Activated CD4-positive, alpha-beta T cell treated with anti-CD3 and anti-CD28 coated beads, Interleukin-2, amount 10 ng/mL, durations not matched to agents 24 days and 14 days (primary cell): ENCODE measurements at regions of chr19 and their contacts with region 1.

Region 1: GRCh38 chr19:35066691-35067563 is 25.4 kb downstream of the HPN start:
- DNase-seq: peak; percentile 96
- H3K4me3 Mint-ChIP-seq: peak overlapping the region; percentile 49
- H3K27ac Mint-ChIP-seq: peak overlapping the region; percentile 78
- H3K4me1 Mint-ChIP-seq: peaks cover 11% of the 10 kb centered on the region
- H3K27me3 Mint-ChIP-seq: peaks cover 2% of the 10 kb centered on the region

Region 2: DNA sequence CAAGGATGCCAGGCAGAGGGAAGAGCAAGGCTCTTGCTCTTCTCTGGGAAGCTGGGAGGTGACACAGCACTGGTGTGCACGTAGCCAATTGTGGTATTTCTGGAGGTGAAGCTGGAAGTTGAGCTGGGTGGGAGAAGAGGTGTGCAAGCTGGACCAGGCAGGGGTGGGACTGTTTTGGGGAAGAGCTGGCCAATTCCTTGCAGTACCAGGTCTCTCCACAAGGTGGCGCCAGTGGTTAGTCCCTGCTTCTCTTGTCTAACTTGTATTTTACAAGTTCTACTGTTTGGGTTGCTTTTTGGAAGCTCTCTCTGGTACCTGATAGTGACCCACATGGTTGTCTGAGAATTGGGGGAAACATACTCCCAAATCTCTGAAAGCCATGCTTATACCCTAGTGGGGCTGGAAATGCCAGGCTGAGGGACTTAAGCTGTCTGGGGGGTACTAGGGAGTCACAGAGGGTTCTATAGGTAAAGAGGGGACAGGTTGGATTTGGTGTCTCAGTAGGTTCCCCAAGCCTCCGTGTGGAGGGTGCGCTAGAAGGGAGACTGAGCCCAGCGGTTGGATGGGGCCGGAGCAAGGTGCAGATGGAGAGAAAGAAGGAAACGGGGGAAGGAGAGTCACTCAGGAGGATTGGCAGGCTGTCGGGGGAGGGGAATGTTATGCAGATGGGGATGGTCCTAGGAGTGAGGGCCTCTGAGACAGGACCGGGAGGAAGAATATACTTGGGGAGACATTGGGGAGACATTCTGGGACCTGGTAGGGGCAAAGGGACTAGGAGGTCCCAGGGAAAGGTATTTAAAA is 22.4 kb before region 1 on chr19:
- intact Hi-C with region 1: loop called (anchors 1 kb)
- DNase-seq: peak; percentile 89
- H3K4me3 Mint-ChIP-seq: no peak overlapping the region
- H3K27ac Mint-ChIP-seq: no peak overlapping the region
- H3K4me1 Mint-ChIP-seq: peaks cover 19% of the 10 kb centered on the region
- H3K27me3 Mint-ChIP-seq: peaks cover 15% of the 10 kb centered on the region

Region 3: DNA sequence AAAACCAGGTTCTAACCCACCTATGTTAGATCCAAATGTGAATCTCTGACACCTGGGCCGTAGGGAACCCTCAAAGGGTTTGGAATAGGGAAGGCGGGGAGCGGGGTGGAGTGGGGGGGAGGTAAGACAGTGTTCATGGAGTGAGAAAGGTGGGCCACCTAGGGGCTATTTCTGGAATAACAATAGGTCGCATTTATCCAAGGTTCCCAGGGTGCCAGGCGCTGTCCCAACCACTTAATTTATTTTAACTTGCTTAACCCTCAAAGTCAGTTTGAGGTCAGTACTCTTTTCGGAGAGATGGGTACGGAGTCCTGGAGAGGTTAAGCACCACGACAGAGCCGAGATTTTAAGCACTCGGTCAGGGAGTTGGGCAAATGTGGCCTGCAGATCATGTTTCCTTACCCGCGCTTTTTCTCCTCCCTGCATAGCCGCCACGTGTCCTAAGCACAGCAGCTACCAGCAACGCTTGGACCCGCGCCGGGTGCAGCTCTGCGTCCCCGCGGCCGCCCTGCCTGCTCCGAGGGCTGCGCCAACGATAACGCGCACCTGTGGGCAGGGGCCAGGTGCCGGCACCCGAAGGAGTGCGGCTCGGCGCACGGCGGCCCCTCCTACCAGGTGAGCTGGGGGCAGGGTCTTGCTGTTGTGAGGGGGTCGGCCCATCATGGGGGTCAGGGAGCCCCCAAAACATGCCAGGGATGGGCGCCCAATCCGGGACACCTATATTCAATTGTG is 23.7 kb after region 1 on chr19:
- intact Hi-C with region 1: loop called (anchors 1 kb)
- DNase-seq: peak; percentile 77
- H3K4me3 Mint-ChIP-seq: no peak overlapping the region
- H3K27ac Mint-ChIP-seq: no peak overlapping the region
- H3K4me1 Mint-ChIP-seq: no peaks in the 10 kb centered on the region
- H3K27me3 Mint-ChIP-seq: peaks cover 5% of the 10 kb centered on the region

Region 4: GRCh38 chr19:35124098-35125060 is 57.5 kb after region 1 on chr19:
- intact Hi-C with region 1: loop called (anchors 5 kb)
- DNase-seq: peak; percentile 96
- H3K4me3 Mint-ChIP-seq: peak overlapping the region; percentile 78
- H3K27ac Mint-ChIP-seq: peak overlapping the region; percentile 83
- H3K4me1 Mint-ChIP-seq: peaks cover 11% of the 10 kb centered on the region
- H3K27me3 Mint-ChIP-seq: peaks cover 5% of the 10 kb centered on the region

Region 5: GRCh38 chr19:35135389-35135909 is 68.5 kb after region 1 on chr19:
- intact Hi-C with region 1: loop called (anchors 1 kb)
- DNase-seq: peak; percentile 90
- H3K4me3 Mint-ChIP-seq: no peak overlapping the region
- H3K27ac Mint-ChIP-seq: no peak overlapping the region
- H3K4me1 Mint-ChIP-seq: peaks cover 7% of the 10 kb centered on the region
- H3K27me3 Mint-ChIP-seq: peaks cover 8% of the 10 kb centered on the region